H1 (cell line): ENCODE measurements at regions of chr22 and their contacts with region 1.

Region 1: DNA sequence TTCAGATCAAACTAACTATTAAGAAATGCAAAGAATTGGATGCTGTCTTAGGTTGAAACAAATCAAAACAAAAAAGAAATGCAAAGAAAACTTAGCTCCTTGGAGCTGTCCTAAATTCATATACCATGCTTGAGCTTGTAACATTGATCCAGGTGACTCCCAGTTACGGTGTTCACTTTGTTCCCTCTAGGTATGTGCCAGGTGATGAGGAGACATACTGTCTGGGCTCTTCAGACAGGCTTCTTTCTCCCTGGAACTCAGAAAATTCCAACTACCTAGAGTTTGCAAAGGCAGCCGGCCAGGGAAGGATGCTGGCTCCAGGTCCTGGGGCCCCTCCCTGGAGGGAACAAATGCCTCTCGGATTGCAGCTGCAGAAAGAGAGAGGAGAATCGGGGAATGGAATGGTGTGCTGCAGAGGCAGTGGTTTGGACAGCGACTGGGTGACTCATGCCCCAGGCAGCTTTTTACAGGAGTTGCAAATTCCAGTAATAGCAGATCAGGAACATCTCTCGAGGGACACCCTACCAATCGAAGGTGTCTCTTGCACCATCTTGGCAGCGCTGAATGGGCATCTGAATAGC is 12.3 kb upstream of the ASPHD2 start:
- DNase-seq: peak; percentile 54 to 70
- H3K4me3 ChIP-seq: no peak overlapping the region
- H3K27ac ChIP-seq: no peak overlapping the region
- H3K4me1 ChIP-seq: no peaks in the 10 kb centered on the region
- H3K27me3 ChIP-seq: 0 out of 7 replicates have a peak, but pooled peaks cover 0 to 4% (median 0%) of the 10 kb centered on the region in 4 experiments
- CTCF ChIP-seq: no peak
- EP300 ChIP-seq: no peak
- POLR2A ChIP-seq: no peak
- RAD21 ChIP-seq: no peak

Region 2: GRCh38 chr22:26354707-26355106 is 62.1 kb before region 1 on chr22:
- CTCF ChIA-PET with region 1: no interaction called
- POLR2A ChIA-PET with region 1: no interaction called
- DNase-seq: no peak
- H3K4me3 ChIP-seq: no peak overlapping the region
- H3K27ac ChIP-seq: no peak overlapping the region
- H3K4me1 ChIP-seq: no peaks in the 10 kb centered on the region
- H3K27me3 ChIP-seq: no peaks in the 10 kb centered on the region
- CTCF ChIP-seq: no peak
- EP300 ChIP-seq: no peak
- POLR2A ChIP-seq: no peak
- RAD21 ChIP-seq: no peak

Region 3: GRCh38 chr22:26428515-26429457 is 12.0 kb after region 1 on chr22 and contains the start of gene ASPHD2:
- CTCF ChIA-PET with region 1: interaction called, 5 read pairs
- POLR2A ChIA-PET with region 1: interaction called, 11 read pairs
- DNase-seq: peak; percentile 9 to 75
- H3K4me3 ChIP-seq: peak within 1 kb of the TSS; percentile 61 to 85 (median 71)
- H3K27ac ChIP-seq: no peak within 1 kb of the TSS
- H3K4me1 ChIP-seq: peaks cover 0 to 8% (median 2%) of the 10 kb centered on the region in 4 experiments; a peak in 4 of 7 replicates
- H3K27me3 ChIP-seq: peaks cover 0 to 6% (median 6%) of the 10 kb centered on the region in 4 experiments; a peak in 4 of 7 replicates
- CTCF ChIP-seq: no peak
- EP300 ChIP-seq: no peak
- POLR2A ChIP-seq: peak; percentile 58 to 70
- RAD21 ChIP-seq: no peak
- total RNA-seq, gene ASPHD2: 11.0 and 11.1 TPM in 2 replicates